PC-9 (cell line): ENCODE measurements at regions of chr9 and their contacts with region 1.

Region 1: GRCh38 chr9:102631559-102631958 is 363.6 kb upstream of the CYLC2 start:
- DNase-seq: no peak
- H3K4me3 ChIP-seq: no peak overlapping the region
- H3K27ac ChIP-seq: no peak overlapping the region
- H3K4me1 ChIP-seq: no peaks in the 10 kb centered on the region
- H3K27me3 ChIP-seq: no peaks in the 10 kb centered on the region
- CTCF ChIP-seq: peak; percentile 62

Region 2: DNA sequence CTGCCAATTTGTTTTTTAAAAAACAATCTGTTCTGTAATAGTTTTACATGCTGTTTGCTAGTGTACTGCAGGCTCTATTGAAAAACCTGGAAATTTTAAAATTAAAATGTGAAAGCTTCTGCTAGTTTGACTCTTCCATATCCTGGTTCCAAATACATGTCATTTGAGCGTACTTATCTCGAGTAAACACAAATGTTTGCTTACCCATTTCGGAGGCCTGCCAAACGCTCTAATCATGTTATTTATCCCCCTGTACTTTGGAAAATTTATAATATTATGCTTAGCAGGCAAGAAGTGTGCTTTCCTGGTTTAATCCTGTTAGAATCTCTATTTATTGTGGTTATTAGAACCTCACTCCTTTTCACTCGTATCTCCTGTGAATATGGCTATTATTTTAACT is 113.2 kb before region 1 on chr9:
- CTCF ChIA-PET with region 1: no interaction called
- POLR2A ChIA-PET with region 1: no interaction called
- intact Hi-C with region 1: no loop called
- DNase-seq: no peak
- H3K4me3 ChIP-seq: no peak overlapping the region
- H3K27ac ChIP-seq: no peak overlapping the region
- H3K4me1 ChIP-seq: no peaks in the 10 kb centered on the region
- H3K27me3 ChIP-seq: no peaks in the 10 kb centered on the region
- CTCF ChIP-seq: no peak

Region 3: GRCh38 chr9:102941868-102942267 is 310.3 kb after region 1 on chr9:
- CTCF ChIA-PET with region 1: no interaction called
- POLR2A ChIA-PET with region 1: no interaction called
- intact Hi-C with region 1: loop called (anchors 10 kb)
- DNase-seq: no peak
- H3K4me3 ChIP-seq: no peak overlapping the region
- H3K27ac ChIP-seq: no peak overlapping the region
- H3K4me1 ChIP-seq: no peaks in the 10 kb centered on the region
- H3K27me3 ChIP-seq: no peaks in the 10 kb centered on the region
- CTCF ChIP-seq: no peak